ENCODE measurements at regions of chr2 and their contacts with region 1.

Region 1: GRCh38 chr2:128305159-128306087 is 13.2 kb downstream of the HS6ST1 start:
- DNase-seq: peak; percentile 53 to 87
- ATAC-seq: peak; percentile 53 to 80 (median 70)
- H3K4me3 ChIP-seq: no peak overlapping the region
- H3K27ac ChIP-seq: peak overlapping the region; percentile 20 to 84 (median 73)
- H3K4me1 ChIP-seq: peaks cover 30 to 66% (median 57%) of the 10 kb centered on the region in 9 donors
- H3K27me3 ChIP-seq: no peaks in the 10 kb centered on the region
- CTCF ChIP-seq: peak in 2 of 9 donors; percentile 19 to 38

Region 2: GRCh38 chr2:128178650-128179460 is 126.6 kb before region 1 on chr2:
- intact Hi-C with region 1: loop called in 5 of 10 experiments (anchors 10 kb)
- DNase-seq: peak; percentile 32 to 70
- ATAC-seq: peak; percentile 76 to 98 (median 94)
- H3K4me3 ChIP-seq: no peak overlapping the region
- H3K27ac ChIP-seq: peak overlapping the region; percentile 52 to 84 (median 68)
- H3K4me1 ChIP-seq: peaks cover 0 to 23% (median 11%) of the 10 kb centered on the region in 9 donors
- H3K27me3 ChIP-seq: no peaks in the 10 kb centered on the region
- CTCF ChIP-seq: peak; percentile 25 to 80 (median 72)

Region 3: DNA sequence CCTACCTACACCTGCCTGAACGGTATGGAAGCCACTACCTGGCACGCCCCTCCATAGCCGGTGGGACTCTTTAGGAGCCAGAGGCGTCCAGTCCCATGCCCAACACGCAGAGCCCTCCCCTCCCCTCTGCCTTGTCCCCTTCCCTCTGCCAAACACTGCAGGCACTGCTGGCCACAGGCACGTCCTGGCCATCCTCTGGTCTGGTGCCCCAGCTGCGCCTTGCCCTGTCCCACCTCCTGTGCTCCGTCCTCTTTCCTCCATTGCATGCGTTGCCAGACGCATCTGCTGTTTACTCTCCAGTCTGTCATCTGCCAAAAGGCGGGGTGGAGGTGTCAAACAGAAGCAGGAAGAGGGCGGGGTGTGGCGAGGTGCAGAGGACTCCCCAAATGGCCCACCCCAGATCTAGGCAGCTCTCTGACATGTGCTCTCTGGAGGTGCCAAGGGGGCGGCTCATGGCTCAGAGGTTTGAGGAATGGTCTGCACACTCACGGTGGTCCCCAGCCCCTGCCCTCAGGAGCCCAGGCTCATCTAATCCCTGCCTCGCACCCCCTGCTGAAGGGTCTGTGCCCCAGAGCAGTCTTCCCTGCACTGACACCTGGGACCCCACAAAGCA is 31.8 kb before region 1 on chr2:
- intact Hi-C with region 1: loop called in 1 of 10 experiments (anchors 2 kb)
- DNase-seq: peak in 1 of 2 donors; percentile 7
- ATAC-seq: no peak
- H3K4me3 ChIP-seq: no peak overlapping the region
- H3K27ac ChIP-seq: no peak overlapping the region
- H3K4me1 ChIP-seq: peaks cover 0 to 4% (median 0%) of the 10 kb centered on the region in 9 donors
- H3K27me3 ChIP-seq: no peaks in the 10 kb centered on the region
- CTCF ChIP-seq: no peak